Activated T-helper 1 cell treated with anti-CD3 and anti-CD28 coated beads, Interleukin-12 subunit alpha, Interleukin-12 subunit beta, Interleukin-2, Interleukin-4 antibody, amounts not matched to agents 30 ng/mL and 10 ng/mL and 1 ng/mL, durations not matched to agents 14 hours and 24 hours and 36 hours (primary cell): ENCODE measurements at regions of chr18 and their contacts with region 1.

Region 1: GRCh38 chr18:23619388-23619881 is 33.1 kb upstream of the NPC1 start:
- DNase-seq: no peak
- H3K4me3 Mint-ChIP-seq: peak overlapping the region; percentile 22
- H3K27ac Mint-ChIP-seq: no peak overlapping the region
- H3K4me1 Mint-ChIP-seq: peaks cover 15% of the 10 kb centered on the region
- H3K27me3 Mint-ChIP-seq: peaks cover 53% of the 10 kb centered on the region

Region 2: GRCh38 chr18:23605938-23606337 is 13.5 kb before region 1 on chr18:
- intact Hi-C with region 1: loop called (anchors 2 kb)
- DNase-seq: no peak
- H3K4me3 Mint-ChIP-seq: no peak overlapping the region
- H3K27ac Mint-ChIP-seq: no peak overlapping the region
- H3K4me1 Mint-ChIP-seq: no peaks in the 10 kb centered on the region
- H3K27me3 Mint-ChIP-seq: no peaks in the 10 kb centered on the region

Region 3: GRCh38 chr18:23703057-23703986 is 83.9 kb after region 1 on chr18:
- intact Hi-C with region 1: loop called (anchors 1 kb)
- DNase-seq: no peak
- H3K4me3 Mint-ChIP-seq: no peak overlapping the region
- H3K27ac Mint-ChIP-seq: no peak overlapping the region
- H3K4me1 Mint-ChIP-seq: no peaks in the 10 kb centered on the region
- H3K27me3 Mint-ChIP-seq: peaks cover 31% of the 10 kb centered on the region

Region 4: DNA sequence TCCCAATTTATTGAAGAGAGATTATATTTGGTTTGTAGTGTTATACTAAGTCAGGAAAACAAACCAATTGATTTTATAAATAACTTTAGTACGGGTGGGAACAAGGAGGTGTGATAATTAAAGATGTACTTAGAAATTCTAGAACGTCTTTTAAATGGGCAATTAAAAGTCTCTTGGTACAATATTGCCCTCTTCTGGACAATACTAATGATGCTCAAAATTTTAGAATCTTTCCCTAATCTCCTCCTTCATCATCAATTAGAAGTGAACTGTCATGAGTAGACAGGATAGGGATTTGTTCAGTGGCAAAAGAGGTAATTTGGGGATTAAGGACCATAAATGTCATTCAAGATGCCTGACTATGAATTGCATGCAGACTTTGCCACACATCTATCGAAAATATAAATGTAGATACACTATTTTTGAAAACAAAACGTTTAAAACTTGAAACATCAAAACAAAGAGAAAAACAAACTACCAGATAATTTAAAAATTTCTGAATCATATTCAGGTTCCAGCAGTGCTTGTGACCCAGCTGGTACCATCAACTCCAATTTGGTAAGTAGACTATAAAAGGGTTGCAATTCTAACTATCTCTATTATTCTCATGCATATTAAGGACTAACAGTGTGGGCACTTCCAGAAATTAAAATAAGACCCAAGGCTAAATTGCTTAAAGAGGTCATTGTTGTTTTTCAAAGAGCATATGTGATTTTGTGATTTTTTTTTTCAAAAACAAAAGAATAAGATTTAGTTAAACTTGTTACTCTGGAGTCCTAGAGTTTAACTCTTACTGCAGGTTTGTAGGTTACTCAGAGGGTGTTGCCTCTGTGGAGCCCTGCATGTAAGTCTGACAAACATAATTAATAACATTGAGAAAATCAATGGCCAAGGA is 193.4 kb after region 1 on chr18:
- intact Hi-C with region 1: loop called (anchors 1 kb)
- DNase-seq: no peak
- H3K4me3 Mint-ChIP-seq: no peak overlapping the region
- H3K27ac Mint-ChIP-seq: no peak overlapping the region
- H3K4me1 Mint-ChIP-seq: peaks cover 23% of the 10 kb centered on the region
- H3K27me3 Mint-ChIP-seq: peaks cover 23% of the 10 kb centered on the region

Region 5: DNA sequence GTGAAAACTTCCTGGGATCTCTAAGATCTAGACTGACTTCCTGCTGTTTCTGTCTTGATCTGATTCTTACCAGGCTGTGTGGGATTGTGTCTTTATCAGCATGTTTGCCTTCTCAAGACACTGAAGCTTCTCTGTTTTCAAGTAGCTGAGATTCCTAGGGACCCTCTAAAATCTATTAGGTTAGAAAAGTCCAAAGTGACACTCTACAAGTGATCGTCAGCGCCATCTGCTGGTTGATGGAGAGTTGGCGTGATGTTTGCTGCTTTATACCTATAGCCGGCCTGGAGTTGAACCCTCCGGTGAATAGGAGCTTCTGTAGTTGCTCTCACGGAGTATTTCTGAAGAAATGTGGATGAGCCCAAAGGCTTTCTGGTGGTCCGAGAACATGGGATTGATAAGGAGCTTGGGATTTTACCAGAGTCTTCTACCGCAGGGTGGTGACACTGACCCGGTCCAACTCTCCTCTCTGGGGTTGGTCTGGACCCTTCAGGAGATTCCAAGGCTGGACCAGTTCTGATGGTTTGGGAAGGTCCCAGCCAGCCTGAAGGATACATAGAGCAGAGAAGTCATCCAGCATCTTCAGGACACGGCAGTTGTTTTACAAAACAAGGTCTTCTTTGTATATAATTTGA is 299.1 kb after region 1 on chr18:
- intact Hi-C with region 1: loop called (anchors 1 kb)
- DNase-seq: peak; percentile 54
- H3K4me3 Mint-ChIP-seq: no peak overlapping the region
- H3K27ac Mint-ChIP-seq: no peak overlapping the region
- H3K4me1 Mint-ChIP-seq: peaks cover 29% of the 10 kb centered on the region
- H3K27me3 Mint-ChIP-seq: peaks cover 26% of the 10 kb centered on the region